ENCODE measurements at regions of chr20 and their contacts with region 1.

Region 1: DNA sequence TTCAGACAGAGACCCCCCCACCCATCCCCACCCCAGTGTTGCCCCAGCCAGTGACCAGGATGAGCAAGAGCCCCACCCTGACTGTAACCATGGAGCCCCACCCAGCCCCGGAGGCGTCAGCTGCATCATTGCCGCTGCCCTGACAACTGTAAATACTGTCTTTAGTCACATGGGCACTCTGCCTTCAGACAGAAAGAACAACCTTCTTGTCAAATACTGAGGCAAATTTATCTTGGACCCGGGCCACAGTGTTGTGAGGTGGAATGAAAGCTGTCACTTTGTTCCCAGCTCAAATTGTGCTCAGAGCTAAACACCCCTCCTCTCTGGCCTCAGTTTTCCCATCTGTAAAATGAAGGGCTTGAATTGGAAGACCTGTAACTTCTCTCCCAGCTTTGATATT is 23.8 kb downstream of the MOCS3 start:
- DNase-seq: no peak
- H3K4me3 ChIP-seq: no peak overlapping the region
- H3K27ac ChIP-seq: no peak overlapping the region
- H3K4me1 ChIP-seq: peaks cover 0 to 14% (median 9%) of the 10 kb centered on the region in 4 donors
- H3K27me3 ChIP-seq: peaks cover 0 to 63% (median 11%) of the 10 kb centered on the region in 4 donors
- CTCF ChIP-seq: no peak
- EP300 ChIP-seq: no peak
- POLR2A ChIP-seq: no peak

Region 2: DNA sequence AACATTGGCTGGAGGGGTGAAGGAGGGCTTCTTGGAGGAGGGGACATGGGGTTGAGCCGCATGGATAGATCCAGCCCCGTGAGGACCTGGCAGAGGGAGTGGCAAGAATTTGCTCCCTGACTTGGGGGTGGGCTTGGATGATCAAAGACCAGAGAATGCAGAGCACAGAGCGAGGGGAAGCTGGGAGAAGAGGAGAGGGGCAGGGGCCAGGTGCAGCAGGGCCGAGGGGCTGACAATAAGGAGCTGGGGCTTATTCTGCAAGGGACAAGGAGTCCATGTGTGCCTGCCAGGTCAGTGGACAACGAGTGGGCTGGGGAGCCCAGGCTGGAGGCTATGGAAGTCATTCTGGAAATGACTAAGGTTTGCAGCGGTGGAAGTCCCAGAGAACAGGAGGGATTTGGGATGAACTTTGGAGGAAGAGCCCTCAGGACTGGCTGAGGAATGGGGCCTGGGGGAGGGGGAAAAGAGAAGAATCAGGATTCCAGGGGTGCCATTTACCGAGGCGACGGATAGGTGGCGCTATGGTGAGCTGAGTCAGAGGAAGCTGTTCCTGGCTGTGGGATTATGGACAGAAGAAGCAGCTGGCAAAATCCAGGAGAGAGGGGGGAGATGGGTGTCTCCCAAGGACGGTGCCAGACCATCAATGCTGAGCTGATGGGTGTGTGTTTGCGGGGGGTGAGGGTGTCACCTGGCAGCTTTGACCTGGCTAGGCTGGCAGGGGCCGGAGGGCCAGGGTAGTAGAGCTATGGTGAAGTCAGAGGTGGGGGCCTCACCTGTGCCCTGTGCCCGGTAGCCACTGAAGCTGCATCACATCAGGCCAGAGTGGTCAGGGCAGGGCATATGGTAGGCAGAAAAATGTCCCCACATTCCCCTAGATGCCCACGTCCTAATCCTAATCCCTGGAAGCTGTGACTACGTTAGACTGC is 32.7 kb after region 1 on chr20:
- intact Hi-C with region 1: no loop called
- DNase-seq: no peak
- H3K4me3 ChIP-seq: no peak overlapping the region
- H3K27ac ChIP-seq: no peak overlapping the region
- H3K4me1 ChIP-seq: no peaks in the 10 kb centered on the region
- H3K27me3 ChIP-seq: peaks cover 0 to 32% (median 0%) of the 10 kb centered on the region in 4 donors
- CTCF ChIP-seq: peak; percentile 25 to 58 (median 45)
- EP300 ChIP-seq: no peak
- POLR2A ChIP-seq: no peak

Region 3: GRCh38 chr20:51306503-51307358 is 324.4 kb after region 1 on chr20:
- intact Hi-C with region 1: loop called (anchors 2 kb)
- DNase-seq: no peak
- H3K4me3 ChIP-seq: no peak overlapping the region
- H3K27ac ChIP-seq: no peak overlapping the region
- H3K4me1 ChIP-seq: peaks cover 0 to 7% (median 5%) of the 10 kb centered on the region in 4 donors
- H3K27me3 ChIP-seq: peaks cover 0 to 4% (median 0%) of the 10 kb centered on the region in 4 donors
- CTCF ChIP-seq: peak in 2 of 3 experiments; percentile 79 to 82
- EP300 ChIP-seq: no peak
- POLR2A ChIP-seq: no peak

Measured in esophagus muscularis mucosa (tissue), 4 donors.